ENCODE measurements at regions of chr3 and their contacts with region 1.

Region 1: GRCh38 chr3:188510366-188510765 is 356.4 kb downstream of the LPP start:
- DNase-seq: no peak
- ATAC-seq: no peak
- H3K4me3 ChIP-seq: no peak overlapping the region
- H3K27ac ChIP-seq: no peak overlapping the region
- H3K4me1 ChIP-seq: peaks cover 2 to 17% of the 10 kb centered on the region in 2 donors
- H3K27me3 ChIP-seq: no peaks in the 10 kb centered on the region

Region 2: GRCh38 chr3:188458756-188459155 is 51.6 kb before region 1 on chr3:
- intact Hi-C with region 1: no loop called
- DNase-seq: no peak
- ATAC-seq: no peak
- H3K4me3 ChIP-seq: no peak overlapping the region
- H3K27ac ChIP-seq: no peak overlapping the region
- H3K4me1 ChIP-seq: peaks cover 2 to 9% of the 10 kb centered on the region in 2 donors
- H3K27me3 ChIP-seq: no peaks in the 10 kb centered on the region

Region 3: DNA sequence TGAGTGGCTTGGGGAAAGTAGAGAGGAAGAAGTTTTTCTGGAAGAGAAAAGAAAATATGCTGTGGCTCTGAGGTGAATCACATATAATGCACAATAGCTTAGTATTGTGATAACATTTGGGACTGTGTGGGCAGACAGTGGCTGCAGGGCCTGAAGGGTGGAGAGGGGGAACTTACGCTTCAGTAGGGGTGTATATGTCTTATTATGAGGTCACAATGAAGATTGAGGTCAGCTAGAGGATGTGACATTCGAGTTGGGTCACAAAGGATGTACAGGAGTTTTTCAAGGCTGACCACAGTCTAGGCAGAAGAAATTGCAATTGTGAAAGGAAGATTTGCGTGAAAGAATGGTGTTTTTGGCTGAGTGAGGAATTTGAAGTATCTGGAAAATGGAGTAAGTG is 58.4 kb after region 1 on chr3:
- intact Hi-C with region 1: loop called in 1 of 2 experiments (anchors 10 kb)
- DNase-seq: no peak
- ATAC-seq: no peak
- H3K4me3 ChIP-seq: no peak overlapping the region
- H3K27ac ChIP-seq: peak overlapping the region in 1 of 2 donors; percentile 38
- H3K4me1 ChIP-seq: peaks cover 6 to 8% of the 10 kb centered on the region in 2 donors
- H3K27me3 ChIP-seq: no peaks in the 10 kb centered on the region

Region 4: GRCh38 chr3:188683032-188683521 is 172.7 kb after region 1 on chr3:
- intact Hi-C with region 1: no loop called
- DNase-seq: peak in 1 of 2 donors; percentile 69
- ATAC-seq: peak; percentile 76
- H3K4me3 ChIP-seq: no peak overlapping the region
- H3K27ac ChIP-seq: peak overlapping the region in 1 of 2 donors; percentile 32
- H3K4me1 ChIP-seq: peaks cover 13 to 34% of the 10 kb centered on the region in 2 donors
- H3K27me3 ChIP-seq: no peaks in the 10 kb centered on the region

Region 5: DNA sequence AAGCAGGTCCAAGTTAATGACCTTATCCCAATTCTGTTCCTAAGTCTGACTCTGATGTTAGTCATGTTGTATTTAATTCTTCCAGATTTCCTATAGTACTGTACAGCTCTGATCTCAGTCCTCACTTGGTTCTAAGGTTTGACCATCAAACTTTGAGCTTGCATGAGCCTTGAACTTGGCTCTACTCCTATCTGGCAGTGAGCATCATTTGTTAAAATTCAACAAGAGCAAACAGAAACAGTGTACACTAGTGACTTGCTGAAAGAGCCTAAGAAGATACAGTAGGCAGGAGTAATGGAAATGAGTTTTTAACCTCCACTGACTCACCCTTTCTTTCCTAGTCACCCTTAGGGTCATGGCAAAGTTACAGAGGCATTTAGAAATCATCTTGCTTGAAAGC is 210.3 kb after region 1 on chr3:
- intact Hi-C with region 1: no loop called
- DNase-seq: no peak
- ATAC-seq: no peak
- H3K4me3 ChIP-seq: no peak overlapping the region
- H3K27ac ChIP-seq: no peak overlapping the region
- H3K4me1 ChIP-seq: peaks cover 3 to 7% of the 10 kb centered on the region in 2 donors
- H3K27me3 ChIP-seq: no peaks in the 10 kb centered on the region